Activated T-helper 2 cell treated with anti-CD3 and anti-CD28 coated beads, Interferon-gamma antibody, Interleukin-2, Interleukin-4, amounts not matched to agents 10 μg/mL and 5 μg/mL and 100 μg/mL, durations not matched to agents 14 hours and 24 hours and 36 hours (primary cell): ENCODE measurements at regions of chr7 and their contacts with region 1.

Region 1: GRCh38 chr7:100965723-100966541 is 3.4 kb upstream of the MUC12 start:
- DNase-seq: peak; percentile 73
- H3K4me3 Mint-ChIP-seq: peak overlapping the region; percentile 60
- H3K27ac Mint-ChIP-seq: no peak overlapping the region
- H3K4me1 Mint-ChIP-seq: peaks cover 10% of the 10 kb centered on the region
- H3K27me3 Mint-ChIP-seq: peaks cover 35% of the 10 kb centered on the region

Region 2: GRCh38 chr7:100556541-100556940 is 409.4 kb before region 1 on chr7:
- intact Hi-C with region 1: no loop called
- DNase-seq: no peak
- H3K4me3 Mint-ChIP-seq: no peak overlapping the region
- H3K27ac Mint-ChIP-seq: peak overlapping the region; percentile 60
- H3K4me1 Mint-ChIP-seq: peaks cover 7% of the 10 kb centered on the region
- H3K27me3 Mint-ChIP-seq: no peaks in the 10 kb centered on the region

Region 3: GRCh38 chr7:100983451-100984187 is 17.7 kb after region 1 on chr7:
- intact Hi-C with region 1: no loop called
- DNase-seq: no peak
- H3K4me3 Mint-ChIP-seq: no peak overlapping the region
- H3K27ac Mint-ChIP-seq: no peak overlapping the region
- H3K4me1 Mint-ChIP-seq: no peaks in the 10 kb centered on the region
- H3K27me3 Mint-ChIP-seq: no peaks in the 10 kb centered on the region

Region 4: DNA sequence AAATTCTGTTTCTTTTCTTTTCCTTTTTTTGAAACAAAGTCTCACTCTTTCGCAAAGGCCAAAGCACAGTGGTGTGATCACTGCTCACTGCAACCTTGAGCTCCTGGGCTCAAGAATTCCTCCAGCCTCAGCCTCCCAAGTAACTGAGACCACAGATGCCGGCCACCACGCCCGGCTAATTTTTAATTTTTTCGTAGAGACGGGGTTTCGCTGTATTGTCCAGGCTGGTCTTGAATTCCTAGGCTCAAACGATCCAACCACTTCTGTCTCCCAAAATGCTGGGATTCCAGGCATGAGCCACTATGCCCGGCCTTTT is 93.7 kb after region 1 on chr7:
- intact Hi-C with region 1: loop called (anchors 1 kb)
- DNase-seq: no peak
- H3K4me3 Mint-ChIP-seq: no peak overlapping the region
- H3K27ac Mint-ChIP-seq: no peak overlapping the region
- H3K4me1 Mint-ChIP-seq: peaks cover 2% of the 10 kb centered on the region
- H3K27me3 Mint-ChIP-seq: peaks cover 14% of the 10 kb centered on the region